Thyroid gland (tissue), 4 donors: ENCODE measurements at regions of chr16 and their contacts with region 1.

Region 1: GRCh38 chr16:352547-353403 is at the start of gene AXIN1:
- DNase-seq: peak; percentile 100
- H3K4me3 ChIP-seq: peak within 1 kb of the TSS in 2 of 3 donors; percentile 33 to 47
- H3K27ac ChIP-seq: peak within 1 kb of the TSS in 2 of 3 donors; percentile 33 to 44
- H3K4me1 ChIP-seq: peaks cover 20 to 28% of the 10 kb centered on the region in 2 donors
- H3K27me3 ChIP-seq: no peaks in the 10 kb centered on the region
- CTCF ChIP-seq: peak in 4 of 6 experiments; percentile 31 to 83 (median 52)
- POLR2A ChIP-seq: peak; percentile 26 to 66
- total RNA-seq, gene AXIN1: 17.5 to 29.7 (median 26.4) TPM

Region 2: DNA sequence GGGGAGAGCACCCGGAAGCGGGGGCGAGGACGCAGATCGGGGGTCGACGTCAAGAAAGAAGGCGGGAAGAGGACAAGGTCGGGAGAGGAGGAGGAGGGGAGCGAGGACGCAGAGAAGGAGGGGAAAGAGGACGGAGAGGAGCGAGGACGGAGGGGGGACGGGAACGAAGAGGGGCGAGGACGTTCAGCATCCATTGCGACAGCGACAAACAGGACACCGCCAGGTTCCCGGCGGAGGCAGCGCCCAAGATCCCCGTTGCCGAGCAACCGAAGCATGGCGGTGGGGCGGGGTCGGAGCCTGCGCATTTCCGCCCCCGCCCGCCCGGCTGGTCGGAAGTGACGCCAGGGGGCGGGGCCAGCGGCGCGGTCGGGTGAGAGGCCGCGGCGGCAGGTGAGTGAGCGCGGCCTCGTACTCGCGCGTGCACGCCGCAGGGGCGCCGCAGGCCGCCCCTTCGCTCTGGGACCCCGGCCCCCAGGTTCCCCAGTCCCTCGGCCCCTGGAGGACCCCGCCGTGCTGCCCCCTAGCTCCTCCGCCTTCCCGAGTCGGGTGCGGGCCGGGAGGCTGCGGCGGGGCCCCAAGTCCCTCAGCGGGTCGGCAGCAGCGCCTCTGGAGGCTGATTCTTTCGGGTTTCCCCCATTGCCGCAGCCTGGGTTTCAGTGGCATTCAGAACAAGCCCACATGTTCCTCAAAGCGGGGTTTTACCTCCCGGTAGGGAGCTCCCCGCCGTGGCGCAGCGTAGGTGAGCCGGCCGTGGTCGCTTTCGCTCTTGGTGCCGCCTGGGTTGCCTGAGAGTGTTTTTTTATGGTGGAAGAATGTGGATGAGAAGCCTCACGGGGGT is 118.1 kb before region 1 on chr16 and contains the start of gene FAM234A:
- intact Hi-C with region 1: loop called (anchors 5 kb)
- DNase-seq: peak; percentile 93 to 94
- H3K4me3 ChIP-seq: peak within 1 kb of the TSS; percentile 55 to 88 (median 79)
- H3K27ac ChIP-seq: peak within 1 kb of the TSS; percentile 84 to 95 (median 91)
- H3K4me1 ChIP-seq: peaks cover 13% of the 10 kb centered on the region in 2 donors
- H3K27me3 ChIP-seq: no peaks in the 10 kb centered on the region
- CTCF ChIP-seq: peak in 4 of 6 experiments; percentile 25 to 45 (median 44)
- POLR2A ChIP-seq: peak; percentile 96 to 99
- total RNA-seq, gene FAM234A: 35.3 to 140 (median 107) TPM

Region 3: DNA sequence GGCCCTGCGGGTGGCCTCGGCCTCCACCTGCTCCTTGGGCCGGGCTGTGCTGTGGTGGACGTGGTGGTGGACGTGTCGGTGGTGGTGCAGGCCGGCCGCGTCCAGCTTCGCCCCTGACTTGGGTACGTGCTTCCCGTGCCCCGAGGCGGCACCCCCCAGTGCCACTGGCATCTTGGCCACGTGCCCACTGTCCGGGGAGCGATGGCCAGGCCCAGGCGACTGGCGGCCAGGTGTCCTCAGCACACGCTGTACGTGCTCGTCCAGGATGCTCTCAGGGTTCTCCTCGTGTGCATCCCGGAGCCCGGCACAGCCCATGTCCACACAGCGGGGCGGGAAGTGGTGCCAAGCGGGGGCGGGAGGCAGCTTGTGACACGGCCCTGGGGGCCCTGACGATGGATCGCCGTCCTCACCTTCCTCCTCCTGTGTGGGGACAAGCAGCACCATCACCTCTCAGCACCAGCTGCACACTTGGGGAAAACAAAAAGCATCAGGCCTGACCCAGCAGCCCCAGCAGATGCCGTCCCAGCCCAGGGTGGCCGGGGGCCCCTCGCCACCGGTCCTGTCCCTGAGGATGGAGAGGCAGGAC is 54.9 kb before region 1 on chr16:
- intact Hi-C with region 1: no loop called
- DNase-seq: no peak
- H3K4me3 ChIP-seq: no peak overlapping the region
- H3K27ac ChIP-seq: no peak overlapping the region
- H3K4me1 ChIP-seq: no peaks in the 10 kb centered on the region
- H3K27me3 ChIP-seq: no peaks in the 10 kb centered on the region
- CTCF ChIP-seq: no peak
- POLR2A ChIP-seq: no peak

Region 4: DNA sequence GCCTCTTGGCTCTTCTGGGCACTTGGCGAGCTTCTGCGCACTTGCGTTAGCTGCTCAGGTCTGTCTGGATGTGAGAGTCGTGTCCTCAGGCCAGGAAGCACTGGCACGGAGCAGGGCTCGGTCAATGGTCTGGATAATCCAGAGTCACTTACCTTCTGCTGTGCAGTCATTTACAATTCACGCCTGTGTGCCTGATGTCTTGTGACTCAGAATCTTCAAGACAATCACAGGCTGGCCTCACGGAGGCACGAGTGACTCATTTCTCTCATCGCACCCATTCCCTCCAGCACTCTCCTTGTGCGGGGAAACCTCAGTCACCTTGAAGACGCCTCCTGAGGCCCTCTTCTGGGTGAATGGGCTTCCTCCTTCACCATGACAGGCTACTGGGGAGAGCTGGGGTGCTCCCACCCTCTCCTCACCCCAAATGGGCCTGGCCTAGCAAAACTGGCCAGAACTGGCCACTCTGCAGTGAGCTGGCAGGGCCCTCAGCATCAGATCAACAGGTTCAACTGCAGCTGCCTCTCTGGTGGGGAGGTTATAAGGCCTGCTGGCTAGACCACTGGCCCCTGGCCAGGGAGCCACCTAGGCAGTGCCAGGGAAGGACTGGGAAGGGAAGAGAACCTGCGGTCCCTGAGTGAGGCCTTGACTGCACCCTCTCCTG is 172.9 kb after region 1 on chr16:
- intact Hi-C with region 1: no loop called
- DNase-seq: peak; percentile 23 to 33
- H3K4me3 ChIP-seq: peak overlapping the region in 1 of 3 donors; percentile 56
- H3K27ac ChIP-seq: peak overlapping the region in 2 of 3 donors; percentile 99 to 100
- H3K4me1 ChIP-seq: peaks cover 25 to 38% of the 10 kb centered on the region in 2 donors
- H3K27me3 ChIP-seq: no peaks in the 10 kb centered on the region
- CTCF ChIP-seq: no peak
- POLR2A ChIP-seq: no peak